ENCODE measurements at regions of chr10 and their contacts with region 1.

Region 1: GRCh38 chr10:70221030-70221429 is 12.2 kb downstream of the PPA1 start:
- DNase-seq: no peak
- H3K4me3 Mint-ChIP-seq: no peak overlapping the region
- H3K27ac Mint-ChIP-seq: no peak overlapping the region
- H3K4me1 Mint-ChIP-seq: peaks cover 37% of the 10 kb centered on the region
- H3K27me3 Mint-ChIP-seq: no peaks in the 10 kb centered on the region

Region 2: DNA sequence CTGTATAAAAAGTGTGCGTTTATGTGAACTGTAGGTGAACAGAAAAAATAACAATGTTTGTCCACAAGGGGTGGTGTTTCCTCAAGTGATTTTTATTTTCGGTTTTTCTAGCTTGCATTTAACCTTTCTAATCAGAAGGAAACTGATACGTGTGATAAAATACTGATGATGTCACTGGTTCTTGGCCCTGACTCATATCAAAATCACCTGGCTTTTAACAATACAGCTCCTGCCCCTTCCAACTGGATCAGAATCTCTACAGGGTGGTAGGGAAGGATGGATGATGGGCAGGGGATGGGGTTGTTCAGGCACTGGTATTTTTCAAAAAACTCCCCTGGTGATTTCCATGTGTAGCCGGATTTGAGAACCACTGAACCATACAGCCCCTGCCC is 51.9 kb after region 1 on chr10:
- CTCF ChIA-PET with region 1: interaction called, 22 read pairs
- POLR2A ChIA-PET with region 1: interaction called, 4 read pairs
- intact Hi-C with region 1: loop called (anchors 2 kb)
- DNase-seq: peak; percentile 24
- H3K4me3 Mint-ChIP-seq: no peak overlapping the region
- H3K27ac Mint-ChIP-seq: peak overlapping the region; percentile 56
- H3K4me1 Mint-ChIP-seq: peaks cover 26% of the 10 kb centered on the region
- H3K27me3 Mint-ChIP-seq: no peaks in the 10 kb centered on the region

Region 3: DNA sequence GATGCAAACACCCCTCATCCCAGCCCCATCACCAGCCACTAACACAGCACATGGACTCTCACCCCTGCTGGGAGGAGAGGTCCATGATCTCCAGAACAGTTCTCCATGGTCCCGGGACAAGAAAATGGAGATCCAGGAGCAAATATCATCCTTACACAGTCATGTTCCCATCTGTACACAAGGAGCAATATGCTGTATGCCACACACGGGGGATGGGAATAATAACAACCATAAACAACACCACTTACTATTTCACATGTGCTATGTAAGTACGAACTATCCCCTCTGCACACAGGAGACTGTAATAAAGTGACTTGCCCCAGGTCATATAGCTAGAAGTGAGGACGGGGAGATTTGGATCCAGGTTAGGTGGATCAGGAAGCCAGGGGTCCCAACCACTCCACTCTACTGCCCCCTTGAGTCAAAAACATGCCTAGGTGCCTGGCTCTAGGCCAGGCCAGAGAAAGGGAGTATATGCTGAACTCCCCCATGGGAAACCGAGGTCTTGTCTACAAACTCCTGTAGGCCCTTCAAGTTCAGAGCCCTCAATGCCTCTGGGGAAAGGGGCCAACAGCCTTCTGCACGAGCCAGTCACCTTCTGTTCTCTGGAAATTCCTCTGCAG is 127.3 kb after region 1 on chr10:
- CTCF ChIA-PET with region 1: interaction called, 32 read pairs
- POLR2A ChIA-PET with region 1: no interaction called
- intact Hi-C with region 1: no loop called
- DNase-seq: peak; percentile 53
- H3K4me3 Mint-ChIP-seq: no peak overlapping the region
- H3K27ac Mint-ChIP-seq: no peak overlapping the region
- H3K4me1 Mint-ChIP-seq: no peaks in the 10 kb centered on the region
- H3K27me3 Mint-ChIP-seq: no peaks in the 10 kb centered on the region

Region 4: GRCh38 chr10:70355051-70356021 is 134.3 kb after region 1 on chr10:
- CTCF ChIA-PET with region 1: interaction called, 383 read pairs
- POLR2A ChIA-PET with region 1: no interaction called
- intact Hi-C with region 1: no loop called
- DNase-seq: peak; percentile 48
- H3K4me3 Mint-ChIP-seq: peak overlapping the region; percentile 57
- H3K27ac Mint-ChIP-seq: peak overlapping the region; percentile 62
- H3K4me1 Mint-ChIP-seq: peaks cover 28% of the 10 kb centered on the region
- H3K27me3 Mint-ChIP-seq: no peaks in the 10 kb centered on the region

Region 5: GRCh38 chr10:70381471-70382421 is 160.7 kb after region 1 on chr10:
- CTCF ChIA-PET with region 1: interaction called, 12 read pairs
- POLR2A ChIA-PET with region 1: no interaction called
- intact Hi-C with region 1: no loop called
- DNase-seq: peak; percentile 48
- H3K4me3 Mint-ChIP-seq: peak overlapping the region; percentile 77
- H3K27ac Mint-ChIP-seq: no peak overlapping the region
- H3K4me1 Mint-ChIP-seq: no peaks in the 10 kb centered on the region
- H3K27me3 Mint-ChIP-seq: no peaks in the 10 kb centered on the region